Body of pancreas (tissue), 4 donors: ENCODE measurements at regions of chr1 and their contacts with region 1.

Region 1: GRCh38 chr1:26408604-26409003 is 2.0 kb upstream of the LIN28A start:
- DNase-seq: peak; percentile 70 to 79 (median 73)
- ATAC-seq: peak; percentile 84
- H3K4me3 ChIP-seq: no peak overlapping the region
- H3K27ac ChIP-seq: no peak overlapping the region
- H3K4me1 ChIP-seq: no peaks in the 10 kb centered on the region
- H3K27me3 ChIP-seq: peaks cover 0 to 29% of the 10 kb centered on the region in 2 donors
- CTCF ChIP-seq: no peak
- POLR2A ChIP-seq: no peak

Region 2: GRCh38 chr1:26279456-26280332 is 128.9 kb before region 1 on chr1 and contains the start of gene SH3BGRL3:
- intact Hi-C with region 1: loop called (anchors 10 kb)
- DNase-seq: peak; percentile 90 to 93 (median 92)
- ATAC-seq: peak; percentile 82
- H3K4me3 ChIP-seq: peak within 1 kb of the TSS; percentile 20 to 99
- H3K27ac ChIP-seq: peak within 1 kb of the TSS; percentile 95 to 97 (median 95)
- H3K4me1 ChIP-seq: peaks cover 69% of the 10 kb centered on the region
- H3K27me3 ChIP-seq: no peaks in the 10 kb centered on the region
- CTCF ChIP-seq: peak; percentile 12 to 48 (median 38)
- POLR2A ChIP-seq: peak; percentile 98 to 99 (median 98)
- total RNA-seq, gene SH3BGRL3: 38.2 to 43.1 TPM